ENCODE measurements at regions of chr3 and their contacts with region 1.

Region 1: GRCh38 chr3:71226565-71227269 is 356.8 kb downstream of the FOXP1 start:
- DNase-seq: peak; percentile 57 to 88 (median 81)
- ATAC-seq: peak; percentile 75
- H3K4me3 ChIP-seq: peak overlapping the region; percentile 0 to 43
- H3K4me3 Mint-ChIP-seq: peak overlapping the region; percentile 73
- H3K27ac ChIP-seq: peak overlapping the region; percentile 18 to 63
- H3K27ac Mint-ChIP-seq: peak overlapping the region; percentile 97
- H3K4me1 ChIP-seq: peaks cover 56% of the 10 kb centered on the region
- H3K4me1 Mint-ChIP-seq: peaks cover 82% of the 10 kb centered on the region
- H3K27me3 ChIP-seq: no peaks in the 10 kb centered on the region
- H3K27me3 Mint-ChIP-seq: no peaks in the 10 kb centered on the region
- CTCF ChIP-seq: no peak

Region 2: DNA sequence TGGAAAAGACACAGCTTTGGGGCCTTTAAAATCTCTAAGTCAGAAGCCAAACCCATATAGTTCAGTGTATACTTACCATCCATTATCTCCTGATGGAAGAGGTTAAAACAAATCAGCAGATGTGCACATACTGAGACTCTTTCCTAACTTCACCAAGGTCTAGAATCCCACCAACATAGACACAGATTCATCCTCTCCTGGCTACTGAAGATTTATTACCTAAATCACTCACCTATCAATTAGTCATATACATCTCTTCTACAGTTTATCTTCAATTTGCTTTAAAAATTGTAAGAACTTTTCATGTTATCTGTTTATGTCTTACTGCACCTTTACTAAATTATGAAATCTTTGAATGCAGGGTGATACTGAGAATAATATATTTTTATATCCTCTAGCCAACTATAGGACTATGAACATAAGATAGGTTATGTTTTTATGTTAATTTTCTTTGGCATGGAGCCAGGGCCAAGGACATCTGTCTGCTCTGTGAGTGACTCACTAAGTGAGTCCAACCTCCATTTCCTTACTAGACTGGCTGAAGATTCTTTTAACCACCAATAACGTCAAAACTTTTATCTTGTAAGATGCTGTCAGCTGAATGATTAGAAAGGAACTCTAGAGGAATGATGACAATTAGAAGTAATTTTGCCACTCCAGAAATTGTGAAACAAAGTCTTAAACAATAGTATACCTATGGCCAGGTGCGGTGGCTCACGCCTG is 40.8 kb before region 1 on chr3:
- CTCF ChIA-PET with region 1: no interaction called
- POLR2A ChIA-PET with region 1: no interaction called
- intact Hi-C with region 1: loop called in 1 of 2 experiments (anchors 5 kb)
- DNase-seq: peak in 7 of 9 experiments; percentile 3 to 68 (median 44)
- ATAC-seq: peak; percentile 83
- H3K4me3 ChIP-seq: no peak overlapping the region
- H3K4me3 Mint-ChIP-seq: no peak overlapping the region
- H3K27ac ChIP-seq: no peak overlapping the region
- H3K27ac Mint-ChIP-seq: peak overlapping the region; percentile 75
- H3K4me1 ChIP-seq: peaks cover 14% of the 10 kb centered on the region
- H3K4me1 Mint-ChIP-seq: peaks cover 42% of the 10 kb centered on the region
- H3K27me3 ChIP-seq: no peaks in the 10 kb centered on the region
- H3K27me3 Mint-ChIP-seq: no peaks in the 10 kb centered on the region
- CTCF ChIP-seq: no peak